ENCODE measurements at regions of chr5 and their contacts with region 1.

Region 1: DNA sequence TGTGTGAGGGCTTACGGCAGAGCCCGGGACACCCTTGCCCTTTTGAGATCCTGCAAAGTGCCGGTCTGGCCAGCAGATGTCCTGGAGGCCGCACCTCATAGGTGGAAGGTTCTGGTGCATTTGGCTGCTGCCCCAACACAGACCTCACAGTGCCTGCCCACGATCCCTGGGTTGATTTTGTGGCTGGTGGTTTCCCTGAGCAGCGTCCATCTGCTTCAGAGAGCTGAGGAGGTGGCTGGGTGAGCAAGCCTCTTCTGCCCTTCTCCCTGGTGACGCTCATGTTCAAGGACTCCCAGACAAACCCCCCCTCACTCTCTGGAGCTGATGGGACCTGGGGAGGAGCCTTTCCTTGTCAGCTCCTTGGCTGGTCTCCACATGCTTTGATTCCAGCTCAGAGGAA is 18.9 kb downstream of the BNIP1 start:
- DNase-seq: peak; percentile 8 to 34
- ATAC-seq: peak in 6 of 8 donors; percentile 28 to 69 (median 57)
- H3K4me3 ChIP-seq: no peak overlapping the region
- H3K27ac ChIP-seq: peak overlapping the region in 8 of 10 donors; percentile 20 to 84 (median 64)
- H3K4me1 ChIP-seq: peaks cover 0 to 46% (median 15%) of the 10 kb centered on the region in 9 donors
- H3K27me3 ChIP-seq: no peaks in the 10 kb centered on the region
- CTCF ChIP-seq: peak in 4 of 9 donors; percentile 6 to 29 (median 20)

Region 2: DNA sequence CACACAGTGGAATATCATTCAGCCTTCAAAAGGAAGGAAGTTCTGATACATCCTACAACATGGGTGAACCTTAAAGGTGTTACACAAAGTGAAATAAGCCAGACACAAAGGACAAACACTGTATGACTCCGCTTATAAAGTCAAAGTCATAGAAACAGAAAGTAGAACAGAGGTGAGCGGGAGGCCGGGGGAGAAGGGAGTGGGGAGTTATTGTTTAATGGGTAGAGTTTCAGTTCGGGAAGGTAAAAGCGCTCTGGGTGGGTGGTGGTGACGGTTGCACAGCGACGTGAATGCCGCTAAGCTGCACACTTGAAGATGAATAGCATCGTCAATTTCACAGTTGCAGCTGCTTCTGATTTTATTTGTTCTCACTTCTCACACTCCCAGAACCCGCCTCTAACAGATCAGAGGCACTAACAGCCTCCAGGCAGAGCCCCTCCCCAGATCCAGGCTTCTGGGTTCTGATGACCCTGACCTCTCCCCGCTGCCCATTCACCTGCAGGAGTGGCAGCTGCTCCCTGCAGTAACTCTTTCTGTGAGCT is 15.2 kb after region 1 on chr5:
- intact Hi-C with region 1: loop called in 1 of 10 experiments (anchors 1 kb)
- DNase-seq: no peak
- ATAC-seq: no peak
- H3K4me3 ChIP-seq: no peak overlapping the region
- H3K27ac ChIP-seq: no peak overlapping the region
- H3K4me1 ChIP-seq: no peaks in the 10 kb centered on the region
- H3K27me3 ChIP-seq: no peaks in the 10 kb centered on the region
- CTCF ChIP-seq: no peak

Region 3: GRCh38 chr5:173204185-173204979 is 41.2 kb after region 1 on chr5:
- intact Hi-C with region 1: loop called in 1 of 10 experiments (anchors 5 kb)
- DNase-seq: no peak
- ATAC-seq: no peak
- H3K4me3 ChIP-seq: no peak overlapping the region
- H3K27ac ChIP-seq: no peak overlapping the region
- H3K4me1 ChIP-seq: no peaks in the 10 kb centered on the region
- H3K27me3 ChIP-seq: peaks cover 0 to 27% (median 15%) of the 10 kb centered on the region in 7 donors
- CTCF ChIP-seq: peak; percentile 9 to 66 (median 48)

Region 4: DNA sequence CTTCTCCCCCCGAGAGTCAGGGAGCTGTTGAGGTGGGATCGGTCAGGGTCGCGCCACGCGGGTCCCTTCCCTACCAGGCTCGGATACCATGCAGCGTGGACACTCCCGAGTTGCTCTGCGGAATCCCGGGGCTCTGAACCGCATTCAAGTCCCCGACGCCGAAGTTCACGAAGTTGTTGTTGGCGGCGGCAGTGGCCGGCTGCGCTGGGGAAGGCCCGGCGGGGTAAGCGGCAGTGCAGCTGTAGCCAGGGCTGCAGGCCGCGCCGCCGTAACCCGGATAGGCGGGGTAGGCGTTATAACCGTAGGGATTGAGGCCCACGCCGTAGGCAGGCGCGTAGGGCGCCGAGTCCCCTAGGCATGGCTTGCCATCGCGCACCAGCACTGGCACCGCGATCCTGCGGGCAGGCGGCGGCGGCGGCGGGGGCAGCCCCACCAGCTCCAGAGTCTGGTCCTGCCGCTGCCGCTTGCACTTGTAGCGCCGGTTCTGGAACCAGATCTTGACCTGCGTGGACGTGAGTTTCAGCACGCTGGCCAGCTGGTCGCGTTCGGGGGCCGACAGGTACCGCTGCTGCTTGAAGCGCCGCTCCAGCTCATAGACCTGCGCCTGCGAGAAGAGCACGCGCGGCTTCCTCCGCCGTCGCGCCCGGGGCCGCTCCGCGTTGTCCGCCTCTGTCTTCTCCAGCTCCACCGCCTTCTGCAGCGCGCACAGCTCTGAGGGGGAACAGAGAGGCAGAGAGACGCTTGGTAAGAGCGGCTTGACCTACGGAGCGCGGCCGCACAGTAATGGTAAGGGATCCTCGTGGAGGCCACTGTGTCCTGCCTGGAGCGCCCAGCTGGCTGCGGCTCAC is 69.5 kb after region 1 on chr5:
- intact Hi-C with region 1: loop called in 6 of 10 experiments (anchors 2 to 10 kb)
- DNase-seq: peak in 1 of 2 donors; percentile 23
- ATAC-seq: no peak
- H3K4me3 ChIP-seq: peak overlapping the region; percentile 44 to 73 (median 62)
- H3K27ac ChIP-seq: peak overlapping the region; percentile 19 to 95 (median 88)
- H3K4me1 ChIP-seq: peaks cover 12 to 66% (median 40%) of the 10 kb centered on the region in 9 donors
- H3K27me3 ChIP-seq: peaks cover 25 to 100% (median 96%) of the 10 kb centered on the region in 7 donors
- CTCF ChIP-seq: no peak

Region 5: DNA sequence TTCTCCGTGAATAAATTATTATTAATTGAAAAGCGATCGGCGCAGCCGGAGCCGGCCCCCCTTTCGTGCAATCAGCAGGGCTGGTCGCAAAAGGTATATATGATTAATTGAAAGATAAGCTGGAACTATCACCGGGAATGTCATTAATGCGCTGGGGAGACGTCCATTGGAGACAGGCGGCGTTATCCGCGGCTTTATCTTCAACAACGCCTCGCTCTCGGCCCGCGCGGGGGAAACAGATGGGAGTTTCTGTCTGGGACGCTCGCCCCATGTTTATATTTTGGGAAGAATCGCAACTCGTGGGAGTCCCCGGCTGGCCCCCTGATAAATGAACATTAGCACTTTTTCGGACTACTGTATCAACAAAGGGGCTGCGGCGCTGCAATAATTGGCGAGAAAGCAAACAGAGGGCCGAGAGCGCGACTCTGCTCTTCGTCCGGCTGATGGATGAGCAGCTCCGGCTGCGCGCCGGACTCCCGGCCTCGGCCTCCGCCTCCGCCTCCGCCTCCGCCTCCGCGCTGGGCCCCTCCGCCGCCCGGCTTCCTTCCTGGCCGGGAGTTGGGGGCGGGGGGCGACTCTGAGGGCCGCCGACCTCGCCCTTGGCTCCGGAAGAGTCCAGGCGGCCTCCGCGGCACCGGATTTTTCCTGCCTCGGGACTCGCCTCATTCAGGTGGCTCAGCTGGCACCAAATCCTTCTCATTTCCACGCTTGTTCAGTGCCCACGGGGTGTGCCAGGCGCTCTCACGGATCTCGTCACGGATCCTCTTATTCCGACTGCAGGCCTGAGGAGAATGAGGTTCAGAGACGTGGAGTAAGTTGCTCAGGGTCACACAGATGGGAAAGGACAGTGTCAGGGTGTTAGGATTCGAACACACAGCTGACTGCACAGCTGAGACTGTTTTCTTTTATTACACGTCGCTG is 75.4 kb after region 1 on chr5:
- intact Hi-C with region 1: loop called in 3 of 10 experiments (anchors 5 to 10 kb)
- DNase-seq: no peak
- ATAC-seq: no peak
- H3K4me3 ChIP-seq: peak overlapping the region; percentile 21 to 51 (median 42)
- H3K27ac ChIP-seq: peak overlapping the region; percentile 70 to 94 (median 89)
- H3K4me1 ChIP-seq: peaks cover 0 to 58% (median 28%) of the 10 kb centered on the region in 9 donors
- H3K27me3 ChIP-seq: peaks cover 12 to 100% (median 96%) of the 10 kb centered on the region in 7 donors
- CTCF ChIP-seq: no peak